ENCODE measurements at regions of chr1 and their contacts with region 1.

Region 1: DNA sequence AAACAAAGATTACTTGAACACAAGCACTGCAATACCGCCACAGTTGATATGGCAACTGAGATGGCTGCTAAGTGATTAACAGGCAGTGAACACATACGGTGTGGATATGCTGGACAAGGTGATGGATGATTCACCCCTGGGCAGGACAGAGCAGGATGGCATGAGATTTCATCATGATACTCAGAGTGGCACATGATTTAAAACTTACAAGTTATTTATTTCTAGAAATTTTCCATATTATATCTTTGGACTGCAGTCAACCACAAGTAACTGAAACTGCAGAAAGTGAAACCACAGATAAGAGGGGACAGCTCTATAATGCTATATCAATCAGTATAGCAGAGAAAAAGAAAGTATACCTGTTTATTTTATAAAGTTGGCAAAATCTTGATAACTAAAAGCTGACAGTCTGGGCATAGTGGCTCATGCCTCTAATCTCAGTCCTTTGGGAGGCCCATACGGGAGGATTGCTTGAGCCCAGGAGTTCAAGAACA is 47.9 kb downstream of the PHACTR4 start:
- DNase-seq: peak; percentile 35 to 68
- ATAC-seq: peak; percentile 98 to 100
- H3K4me3 ChIP-seq: no peak overlapping the region
- H3K27ac ChIP-seq: peak overlapping the region in 2 of 4 donors; percentile 46 to 57
- H3K4me1 ChIP-seq: peaks cover 8 to 18% of the 10 kb centered on the region in 2 donors
- H3K27me3 ChIP-seq: no peaks in the 10 kb centered on the region
- CTCF ChIP-seq: no peak
- POLR2A ChIP-seq: no peak

Region 2: GRCh38 chr1:28466226-28466778 is 48.8 kb after region 1 on chr1:
- in situ Hi-C with region 1: no loop called
- intact Hi-C with region 1: loop called (anchors 10 kb)
- DNase-seq: no peak
- ATAC-seq: no peak
- H3K4me3 ChIP-seq: no peak overlapping the region
- H3K27ac ChIP-seq: no peak overlapping the region
- H3K4me1 ChIP-seq: no peaks in the 10 kb centered on the region
- H3K27me3 ChIP-seq: no peaks in the 10 kb centered on the region
- CTCF ChIP-seq: no peak
- POLR2A ChIP-seq: no peak

Measured in gastrocnemius medialis (tissue), 4 donors.